PC-9 (cell line): ENCODE measurements at regions of chr14 and their contacts with region 1.

Region 1: DNA sequence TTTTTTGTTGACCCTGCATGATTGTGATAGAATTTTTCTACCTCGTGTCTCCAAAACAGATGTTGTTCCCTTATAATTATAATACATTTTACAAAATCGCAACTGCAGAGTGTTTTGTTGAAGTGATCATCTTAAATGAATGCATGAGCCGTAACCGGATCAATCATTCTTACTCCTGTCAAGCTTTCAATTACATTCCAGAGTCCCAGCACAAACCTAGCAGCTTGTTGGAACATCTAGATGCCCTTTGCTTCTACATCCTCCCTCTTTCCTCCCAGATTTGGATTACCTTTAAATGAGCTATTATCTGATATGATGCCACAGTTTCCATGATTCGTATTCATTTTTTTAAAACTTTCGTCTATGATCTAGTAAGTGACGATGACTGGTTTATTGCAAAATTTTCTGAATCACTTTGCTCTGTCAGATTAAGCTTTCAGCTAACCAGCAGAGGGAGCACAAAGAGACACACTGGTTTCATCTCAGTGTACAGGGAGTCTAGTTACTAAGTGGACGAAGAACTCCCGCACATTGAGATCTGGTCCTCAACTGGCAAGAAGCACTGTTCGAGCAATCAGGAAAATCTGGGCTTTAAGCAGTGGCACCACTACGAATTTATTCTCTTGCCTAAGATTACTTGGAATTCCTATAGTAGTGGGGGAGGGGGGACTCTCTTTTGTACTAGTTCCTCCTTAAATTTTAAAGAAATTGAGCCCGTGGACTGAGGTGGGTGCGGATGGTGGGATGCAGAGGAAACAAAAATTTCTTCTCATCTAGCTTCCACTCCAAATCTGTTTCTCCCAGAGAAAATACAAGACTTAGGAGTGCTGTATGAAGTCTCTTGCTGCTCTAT is 40.9 kb downstream of the TSHR start:
- DNase-seq: peak in 1 of 2 experiments; percentile 65
- H3K4me3 ChIP-seq: no peak overlapping the region
- H3K27ac ChIP-seq: no peak overlapping the region
- H3K4me1 ChIP-seq: no peaks in the 10 kb centered on the region
- H3K27me3 ChIP-seq: peaks cover 14% of the 10 kb centered on the region
- CTCF ChIP-seq: peak; percentile 73

Region 2: DNA sequence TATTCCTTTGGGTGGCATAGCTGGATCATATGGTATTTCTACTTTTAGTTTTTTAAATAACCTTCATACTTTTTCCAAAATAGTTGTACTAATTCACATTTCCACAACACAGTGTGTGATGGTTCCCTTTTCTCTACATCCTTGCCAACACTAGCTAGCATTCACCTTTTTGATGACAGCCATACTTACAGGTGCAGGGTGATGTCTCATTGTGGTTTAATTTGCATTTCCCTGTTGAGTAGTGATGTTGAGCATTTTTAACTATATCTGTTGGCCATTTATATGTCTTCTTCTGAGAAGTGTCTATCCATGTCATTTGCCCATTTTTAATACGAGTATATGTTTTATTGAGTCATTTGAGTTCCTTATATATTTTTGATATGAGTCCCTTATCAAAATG is 55.3 kb after region 1 on chr14:
- CTCF ChIA-PET with region 1: no interaction called
- POLR2A ChIA-PET with region 1: no interaction called
- intact Hi-C with region 1: no loop called
- DNase-seq: no peak
- H3K4me3 ChIP-seq: no peak overlapping the region
- H3K27ac ChIP-seq: no peak overlapping the region
- H3K4me1 ChIP-seq: no peaks in the 10 kb centered on the region
- H3K27me3 ChIP-seq: peaks cover 12% of the 10 kb centered on the region; the same call in 1 of the 2 replicates
- CTCF ChIP-seq: no peak

Region 3: GRCh38 chr14:81170104-81170828 is 174.0 kb after region 1 on chr14:
- CTCF ChIA-PET with region 1: no interaction called
- POLR2A ChIA-PET with region 1: no interaction called
- intact Hi-C with region 1: loop called (anchors 2 kb)
- DNase-seq: peak; percentile 68 to 84
- H3K4me3 ChIP-seq: peak overlapping the region; percentile 54
- H3K27ac ChIP-seq: 0 out of 2 replicates have a peak overlapping the region, but pooled peaks have one; percentile 16
- H3K4me1 ChIP-seq: no peaks in the 10 kb centered on the region
- H3K27me3 ChIP-seq: no peaks in the 10 kb centered on the region
- CTCF ChIP-seq: peak; percentile 93

Region 4: DNA sequence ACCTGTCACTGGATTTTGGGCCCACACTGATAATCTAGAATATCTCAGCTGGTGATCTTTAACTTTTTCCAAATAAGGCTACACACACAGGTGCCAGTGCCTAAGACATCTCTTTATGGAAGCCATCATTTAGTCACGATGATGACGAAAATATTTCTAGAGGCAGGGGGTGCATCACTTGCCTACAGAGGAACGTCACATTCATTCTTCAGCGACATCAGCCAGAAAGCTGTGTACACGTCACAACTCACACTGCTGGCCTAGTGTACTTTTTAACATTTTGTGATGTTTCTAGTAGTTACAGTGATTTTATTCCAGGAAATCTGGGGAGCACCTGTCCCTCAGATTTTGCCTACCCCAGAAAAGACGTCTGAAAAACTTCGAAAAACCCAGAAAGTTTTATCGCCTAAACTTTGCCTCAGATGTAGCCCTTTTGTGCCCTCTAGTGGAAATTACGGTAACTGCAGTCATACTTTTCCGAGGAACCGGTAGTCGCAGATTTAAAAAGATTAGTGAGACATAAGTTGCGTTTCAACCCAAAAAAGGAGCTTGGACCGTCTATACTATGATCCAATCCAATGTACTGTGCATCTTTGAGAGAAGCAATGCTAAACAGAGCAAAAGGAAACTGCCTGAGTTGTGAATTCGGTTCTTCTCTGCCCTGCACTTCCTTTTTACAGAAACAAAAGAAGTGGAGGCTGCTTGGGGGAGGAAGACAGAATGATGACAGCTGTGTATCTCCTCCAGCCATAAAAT is 468.1 kb after region 1 on chr14:
- CTCF ChIA-PET with region 1: interaction called, 3 read pairs
- POLR2A ChIA-PET with region 1: no interaction called
- intact Hi-C with region 1: loop called (anchors 10 kb)
- DNase-seq: peak in 1 of 2 experiments; percentile 5
- H3K4me3 ChIP-seq: peak overlapping the region; percentile 33; the same call in 1 of the 2 replicates
- H3K27ac ChIP-seq: no peak overlapping the region
- H3K4me1 ChIP-seq: no peaks in the 10 kb centered on the region
- H3K27me3 ChIP-seq: no peaks in the 10 kb centered on the region
- CTCF ChIP-seq: peak; percentile 90

Region 5: GRCh38 chr14:81868166-81868565 is 871.9 kb after region 1 on chr14:
- CTCF ChIA-PET with region 1: no interaction called
- POLR2A ChIA-PET with region 1: no interaction called
- intact Hi-C with region 1: no loop called
- DNase-seq: no peak
- H3K4me3 ChIP-seq: no peak overlapping the region
- H3K27ac ChIP-seq: no peak overlapping the region
- H3K4me1 ChIP-seq: no peaks in the 10 kb centered on the region
- H3K27me3 ChIP-seq: no peaks in the 10 kb centered on the region
- CTCF ChIP-seq: no peak